MCF 10A (cell line): ENCODE measurements at regions of chr15 and their contacts with region 1.

Region 1: DNA sequence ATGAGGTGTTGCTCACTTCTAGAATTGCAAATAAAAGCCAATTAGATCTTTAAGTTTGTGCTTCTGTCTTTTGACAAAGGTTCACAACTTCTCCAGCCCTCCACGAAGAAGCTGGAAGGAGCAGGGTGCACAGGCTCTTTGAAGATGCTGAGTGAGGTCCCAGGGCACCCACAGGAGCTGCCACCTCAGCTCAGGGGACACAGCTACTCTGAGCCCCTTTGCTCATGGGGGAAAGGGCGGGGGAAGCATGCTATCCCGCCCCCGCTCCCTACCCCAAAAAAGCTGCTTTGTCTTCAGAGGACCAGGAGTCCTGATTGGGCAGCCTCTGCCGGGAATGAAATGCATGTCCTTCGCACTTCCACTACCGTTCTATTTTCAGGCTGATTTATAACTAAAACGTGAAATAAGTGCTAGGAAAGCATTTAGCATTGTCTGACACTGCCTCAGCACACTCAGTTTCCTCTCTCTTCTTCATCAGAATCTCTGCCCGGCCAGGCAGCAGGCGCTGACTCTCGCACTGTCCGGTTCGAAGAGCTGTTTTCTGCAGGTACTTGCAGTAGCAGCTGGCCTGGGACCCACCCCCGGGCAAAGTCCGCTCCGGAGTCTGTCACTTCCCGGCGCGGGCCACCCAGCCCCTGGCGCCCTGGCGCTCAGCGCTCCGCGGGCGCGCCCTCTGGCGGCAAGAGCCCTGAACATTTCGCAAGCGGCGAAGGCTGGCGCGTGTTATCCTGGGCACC is 45.5 kb upstream of the KLHL25 start:
- DNase-seq: peak; percentile 79
- H3K4me3 Mint-ChIP-seq: peak overlapping the region; percentile 53
- H3K27ac Mint-ChIP-seq: no peak overlapping the region
- H3K4me1 Mint-ChIP-seq: no peaks in the 10 kb centered on the region
- H3K27me3 Mint-ChIP-seq: peaks cover 5% of the 10 kb centered on the region
- CTCF ChIP-seq: peak; percentile 87

Region 2: GRCh38 chr15:85730001-85730820 is 110.0 kb before region 1 on chr15:
- CTCF ChIA-PET with region 1: interaction called, 128 read pairs
- POLR2A ChIA-PET with region 1: interaction called, 4 read pairs
- intact Hi-C with region 1: loop called (anchors 1 kb)
- DNase-seq: peak; percentile 75
- H3K4me3 Mint-ChIP-seq: no peak overlapping the region
- H3K27ac Mint-ChIP-seq: no peak overlapping the region
- H3K4me1 Mint-ChIP-seq: peaks cover 26% of the 10 kb centered on the region
- H3K27me3 Mint-ChIP-seq: no peaks in the 10 kb centered on the region
- CTCF ChIP-seq: peak; percentile 72

Region 3: DNA sequence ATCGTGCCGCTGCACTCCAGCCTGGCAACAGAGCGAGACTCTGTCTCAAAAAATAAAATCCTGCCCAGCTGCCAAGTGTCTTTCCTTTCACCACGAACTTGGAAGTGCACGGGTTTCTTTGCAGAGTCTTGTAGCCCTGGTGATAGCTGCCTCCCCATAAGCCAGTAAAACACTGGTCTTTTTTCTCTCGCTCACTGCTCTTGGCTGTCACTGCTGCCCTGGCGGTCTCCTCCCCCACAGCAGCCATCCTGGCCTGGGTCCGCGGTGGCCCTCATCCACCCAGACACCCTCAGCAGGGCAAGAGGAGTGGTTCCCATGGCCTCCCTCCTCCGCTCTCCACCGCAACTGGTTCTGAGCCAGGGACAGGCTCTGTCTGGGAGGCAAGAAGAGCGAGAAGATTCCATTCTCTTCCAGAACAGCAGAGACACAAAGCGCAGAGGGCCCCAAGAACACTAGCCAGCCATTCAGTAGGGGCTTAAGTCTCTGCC is 89.9 kb before region 1 on chr15:
- CTCF ChIA-PET with region 1: interaction called, 10 read pairs
- POLR2A ChIA-PET with region 1: no interaction called
- intact Hi-C with region 1: no loop called
- DNase-seq: no peak
- H3K4me3 Mint-ChIP-seq: no peak overlapping the region
- H3K27ac Mint-ChIP-seq: no peak overlapping the region
- H3K4me1 Mint-ChIP-seq: peaks cover 24% of the 10 kb centered on the region
- H3K27me3 Mint-ChIP-seq: no peaks in the 10 kb centered on the region
- CTCF ChIP-seq: no peak

Region 4: DNA sequence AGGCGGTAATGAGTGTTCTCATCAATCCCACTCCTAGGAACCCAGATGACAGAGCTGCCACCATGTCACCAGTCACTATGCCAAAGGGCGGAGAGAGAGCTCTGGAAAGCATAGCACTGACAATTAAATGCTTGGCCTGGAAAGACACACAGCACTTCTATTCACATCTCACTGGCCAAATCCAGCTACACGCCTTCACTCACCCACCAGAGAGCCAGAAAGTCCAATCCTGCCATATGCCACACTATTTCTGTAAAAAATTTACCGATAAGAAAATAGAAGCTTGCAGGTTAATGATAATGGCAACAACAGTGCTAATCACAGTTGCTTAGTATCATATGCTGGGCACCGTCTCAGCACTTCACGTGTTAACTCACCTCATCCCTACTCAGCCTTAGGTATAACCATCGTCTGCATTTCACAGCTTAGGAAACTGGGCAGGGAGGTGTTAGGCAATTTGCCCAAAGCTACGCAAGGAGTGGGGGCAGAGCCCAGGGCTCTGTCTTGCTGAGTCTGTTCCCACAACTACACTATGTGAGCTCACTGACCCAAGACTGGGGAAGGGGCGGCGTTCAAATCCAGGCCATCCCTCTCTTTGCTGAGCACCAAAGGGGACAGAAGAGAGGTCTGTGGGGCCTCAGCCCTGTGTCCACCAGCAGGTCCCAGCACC is 62.0 kb before region 1 on chr15:
- CTCF ChIA-PET with region 1: interaction called, 10 read pairs
- POLR2A ChIA-PET with region 1: interaction called, 3 read pairs
- intact Hi-C with region 1: no loop called
- DNase-seq: peak; percentile 51
- H3K4me3 Mint-ChIP-seq: no peak overlapping the region
- H3K27ac Mint-ChIP-seq: no peak overlapping the region
- H3K4me1 Mint-ChIP-seq: peaks cover 13% of the 10 kb centered on the region
- H3K27me3 Mint-ChIP-seq: no peaks in the 10 kb centered on the region
- CTCF ChIP-seq: no peak

Region 5: DNA sequence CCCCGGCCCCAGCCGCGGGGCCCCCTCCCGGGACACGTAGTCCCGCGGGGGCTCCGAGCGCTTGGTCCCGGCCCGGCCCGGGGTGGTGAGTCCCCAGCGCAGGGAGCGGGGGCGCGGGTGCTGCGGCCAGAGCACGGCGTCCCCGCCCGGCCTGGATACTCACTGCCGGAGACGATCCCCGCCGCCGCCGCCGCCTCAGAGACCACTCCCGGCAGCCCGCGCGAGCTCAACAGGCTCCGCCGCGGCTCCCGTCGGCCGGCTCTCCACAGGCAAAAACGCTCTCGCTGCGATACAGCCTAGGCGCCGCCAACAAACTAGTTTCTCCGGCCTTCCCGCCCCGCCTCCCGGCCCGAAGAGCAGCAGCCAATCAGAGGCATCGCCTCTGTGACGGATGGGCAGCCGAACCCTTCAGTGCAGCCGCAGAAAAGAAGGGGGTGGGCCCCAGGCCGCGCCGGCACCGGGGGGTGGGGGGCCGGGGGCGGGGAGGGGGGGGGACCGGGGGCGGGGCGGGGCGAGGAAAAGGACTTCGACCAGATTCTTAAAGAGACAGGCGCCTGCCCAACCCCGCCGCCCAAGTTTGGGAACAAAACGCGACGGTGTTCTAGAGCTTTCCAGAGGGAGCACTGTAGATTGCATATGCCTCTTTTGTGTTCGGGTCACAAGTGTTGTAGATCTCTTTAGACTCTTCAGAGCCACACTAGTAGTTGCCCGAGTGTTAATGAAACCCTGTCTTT is 45.5 kb before region 1 on chr15 and contains the start of gene KLHL25:
- CTCF ChIA-PET with region 1: interaction called, 42 read pairs
- POLR2A ChIA-PET with region 1: no interaction called
- intact Hi-C with region 1: no loop called
- DNase-seq: peak; percentile 95
- H3K4me3 Mint-ChIP-seq: peak within 1 kb of the TSS; percentile 80
- H3K27ac Mint-ChIP-seq: peak within 1 kb of the TSS; percentile 32
- H3K4me1 Mint-ChIP-seq: peaks cover 22% of the 10 kb centered on the region
- H3K27me3 Mint-ChIP-seq: no peaks in the 10 kb centered on the region
- CTCF ChIP-seq: no peak
- total RNA-seq, gene KLHL25: 3.1 and 3.3 TPM in 2 replicates

Region 6: GRCh38 chr15:85810075-85810474 is 30.2 kb before region 1 on chr15:
- CTCF ChIA-PET with region 1: interaction called, 11 read pairs
- POLR2A ChIA-PET with region 1: no interaction called
- intact Hi-C with region 1: no loop called
- DNase-seq: peak; percentile 32
- H3K4me3 Mint-ChIP-seq: no peak overlapping the region
- H3K27ac Mint-ChIP-seq: no peak overlapping the region
- H3K4me1 Mint-ChIP-seq: peaks cover 3% of the 10 kb centered on the region
- H3K27me3 Mint-ChIP-seq: no peaks in the 10 kb centered on the region
- CTCF ChIP-seq: no peak

Region 7: DNA sequence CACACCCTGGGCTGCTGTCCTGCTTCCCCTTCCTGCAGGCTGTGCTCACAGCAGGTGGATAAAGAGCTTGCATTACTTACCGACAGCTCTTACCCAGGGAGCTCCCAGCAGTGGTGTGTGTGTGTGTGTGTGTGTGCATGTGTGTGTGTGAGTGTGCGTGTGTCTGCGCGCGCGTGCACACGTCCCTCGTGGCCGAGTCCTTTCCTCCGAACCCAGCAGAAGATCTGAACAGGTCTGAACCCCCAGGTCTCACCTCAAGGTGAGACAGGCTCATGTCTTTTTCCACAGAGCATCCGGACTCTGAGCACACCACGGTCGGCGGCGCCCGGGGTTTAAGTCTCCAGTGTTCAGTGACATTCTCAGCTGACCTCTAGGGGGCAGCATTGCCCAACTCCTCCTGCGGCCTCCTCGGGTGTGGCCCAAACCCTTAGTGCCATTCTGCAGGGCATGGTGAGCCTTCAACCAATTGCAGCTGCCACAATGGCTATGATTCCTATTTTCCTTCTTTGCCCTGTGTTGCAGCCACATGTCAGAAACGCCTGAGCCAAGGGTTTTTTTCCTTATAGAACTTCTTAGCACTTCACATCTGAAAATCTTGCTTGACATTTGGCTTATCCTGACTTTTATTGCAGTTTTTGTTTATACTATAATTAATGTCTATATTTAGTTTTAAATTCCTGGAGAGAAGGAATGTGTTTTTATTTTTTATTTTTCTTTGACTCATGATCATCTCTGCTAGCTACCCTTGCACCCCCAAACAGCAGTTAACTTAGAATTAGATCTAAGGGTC is 18.5 kb after region 1 on chr15:
- CTCF ChIA-PET with region 1: interaction called, 12 read pairs
- POLR2A ChIA-PET with region 1: no interaction called
- intact Hi-C with region 1: no loop called
- DNase-seq: peak; percentile 73
- H3K4me3 Mint-ChIP-seq: no peak overlapping the region
- H3K27ac Mint-ChIP-seq: no peak overlapping the region
- H3K4me1 Mint-ChIP-seq: no peaks in the 10 kb centered on the region
- H3K27me3 Mint-ChIP-seq: peaks cover 32% of the 10 kb centered on the region
- CTCF ChIP-seq: peak; percentile 89